Ascending aorta (tissue), 2 donors: ENCODE measurements at regions of chr10 and their contacts with region 1.

Region 1: GRCh38 chr10:96831867-96832720 is at the start of gene LCOR:
- DNase-seq: peak; percentile 25 to 92
- H3K4me3 ChIP-seq: peak within 1 kb of the TSS; percentile 71 to 92
- H3K27ac ChIP-seq: peak within 1 kb of the TSS; percentile 92 to 98
- H3K4me1 ChIP-seq: peaks cover 0 to 19% of the 10 kb centered on the region in 2 donors
- H3K27me3 ChIP-seq: no peaks in the 10 kb centered on the region
- CTCF ChIP-seq: peak in 2 of 3 experiments; percentile 3 to 25
- total RNA-seq, gene LCOR: 7.5 TPM

Region 2: GRCh38 chr10:96395931-96396877 is 435.9 kb before region 1 on chr10:
- intact Hi-C with region 1: loop called (anchors 5 kb)
- DNase-seq: peak in 1 of 2 donors; percentile 72
- H3K4me3 ChIP-seq: no peak overlapping the region
- H3K27ac ChIP-seq: no peak overlapping the region
- H3K4me1 ChIP-seq: no peaks in the 10 kb centered on the region
- H3K27me3 ChIP-seq: no peaks in the 10 kb centered on the region
- CTCF ChIP-seq: peak; percentile 54 to 77 (median 64)

Region 3: DNA sequence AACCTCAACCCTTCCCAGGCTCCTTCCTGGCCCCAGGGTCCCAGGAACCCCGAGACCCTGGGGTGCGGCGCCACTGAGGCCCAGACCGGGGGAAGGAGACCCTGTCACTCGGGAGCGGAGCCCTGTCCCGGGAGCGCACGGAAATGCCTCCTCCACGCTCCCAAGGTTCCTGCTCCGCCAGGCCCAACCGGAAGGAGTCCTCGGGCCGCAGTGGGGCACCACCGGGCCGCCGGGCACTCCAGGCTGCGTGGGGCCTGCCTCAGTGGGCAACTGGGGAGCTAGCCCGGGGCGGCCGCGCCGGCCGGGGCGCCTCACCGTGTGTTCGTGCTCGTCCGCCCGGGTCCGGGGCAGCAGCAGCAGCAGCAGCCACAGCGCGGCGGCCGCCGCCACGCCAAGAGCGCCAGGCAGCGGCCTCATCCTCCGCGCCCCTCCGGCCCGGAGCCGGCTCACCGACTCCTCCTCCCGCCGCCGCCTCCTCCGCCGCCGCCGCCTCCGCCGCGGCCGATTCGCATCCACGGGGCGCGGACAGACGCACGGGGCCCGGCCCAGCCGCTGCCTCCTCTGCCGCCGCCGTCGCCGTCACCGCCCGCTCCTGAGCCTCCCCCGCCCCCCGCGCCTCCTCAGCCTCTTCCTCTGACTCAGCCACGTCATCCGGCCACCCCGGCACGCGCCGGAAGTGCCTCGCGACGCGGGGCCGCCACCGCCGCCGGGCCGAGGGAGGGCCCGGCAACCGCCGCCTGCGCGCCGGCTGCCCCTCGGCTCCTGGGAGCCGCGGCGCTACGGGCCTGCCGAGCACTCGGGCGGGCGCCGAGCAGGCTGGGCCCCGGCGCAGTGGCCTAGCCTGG is 245.5 kb before region 1 on chr10 and contains the start of gene TM9SF3:
- intact Hi-C with region 1: loop called (anchors 1 kb)
- DNase-seq: peak; percentile 67 to 96
- H3K4me3 ChIP-seq: peak within 1 kb of the TSS; percentile 96 to 97
- H3K27ac ChIP-seq: peak within 1 kb of the TSS; percentile 97 to 98
- H3K4me1 ChIP-seq: peaks cover 3 to 44% of the 10 kb centered on the region in 2 donors
- H3K27me3 ChIP-seq: no peaks in the 10 kb centered on the region
- CTCF ChIP-seq: peak in 1 of 3 experiments; percentile 18
- total RNA-seq, gene TM9SF3: 30.4 TPM

Region 4: DNA sequence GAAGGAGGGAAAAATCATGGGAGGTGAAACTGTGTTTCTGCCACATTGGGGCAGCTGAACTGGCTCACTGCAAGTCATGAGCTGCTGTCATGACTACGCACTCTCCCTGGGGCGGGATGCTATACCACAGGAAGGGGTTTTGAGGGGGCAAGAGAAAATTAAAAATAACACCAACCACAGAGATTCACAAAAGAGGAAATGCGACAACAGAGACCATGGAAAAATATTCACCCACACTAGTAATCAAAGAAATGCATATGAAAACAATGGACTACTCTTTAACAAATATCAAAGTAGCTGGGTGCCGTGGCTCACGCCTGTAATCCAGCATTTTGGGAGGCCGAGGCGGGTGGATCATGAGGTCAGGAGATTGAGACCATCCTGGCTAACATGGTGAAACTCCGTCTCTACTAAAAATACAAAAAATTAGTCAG is 180.1 kb before region 1 on chr10:
- intact Hi-C with region 1: no loop called
- DNase-seq: peak in 1 of 2 donors; percentile 18
- H3K4me3 ChIP-seq: no peak overlapping the region
- H3K27ac ChIP-seq: no peak overlapping the region
- H3K4me1 ChIP-seq: no peaks in the 10 kb centered on the region
- H3K27me3 ChIP-seq: no peaks in the 10 kb centered on the region
- CTCF ChIP-seq: no peak

Region 5: GRCh38 chr10:96863922-96864543 is 31.9 kb after region 1 on chr10:
- intact Hi-C with region 1: loop called (anchors 2 kb)
- DNase-seq: no peak
- H3K4me3 ChIP-seq: no peak overlapping the region
- H3K27ac ChIP-seq: no peak overlapping the region
- H3K4me1 ChIP-seq: peaks cover 0 to 13% of the 10 kb centered on the region in 2 donors
- H3K27me3 ChIP-seq: no peaks in the 10 kb centered on the region
- CTCF ChIP-seq: no peak

Region 6: DNA sequence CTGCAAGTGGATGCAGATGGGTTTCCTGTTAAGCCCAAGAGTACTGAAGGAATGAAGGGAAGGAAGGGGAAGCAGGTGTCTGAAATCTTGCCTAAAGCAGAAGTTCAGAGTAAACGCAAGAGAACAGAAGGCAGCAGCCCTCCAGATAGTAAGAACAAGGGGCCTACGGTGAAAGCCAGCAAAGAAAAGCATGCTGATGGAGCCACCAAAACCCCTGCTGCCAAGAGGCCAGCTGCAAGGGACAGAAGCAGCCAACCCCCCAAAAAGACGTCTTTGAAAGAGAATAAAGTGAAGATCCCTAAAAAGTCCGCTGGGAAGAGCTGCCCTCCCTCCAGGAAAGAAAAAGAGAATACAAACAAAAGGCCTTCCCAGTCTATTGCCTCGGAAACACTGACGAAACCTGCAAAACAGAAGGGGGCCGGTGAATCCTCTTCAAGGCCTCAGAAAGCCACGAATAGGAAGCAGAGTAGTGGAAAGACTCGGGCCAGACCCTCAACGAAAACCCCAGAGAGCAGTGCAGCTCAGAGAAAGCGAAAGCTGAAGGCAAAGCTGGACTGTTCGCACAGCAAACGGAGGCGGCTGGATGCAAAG is 152.5 kb after region 1 on chr10:
- intact Hi-C with region 1: no loop called
- DNase-seq: no peak
- H3K4me3 ChIP-seq: no peak overlapping the region
- H3K27ac ChIP-seq: no peak overlapping the region
- H3K4me1 ChIP-seq: peaks cover 0 to 11% of the 10 kb centered on the region in 2 donors
- H3K27me3 ChIP-seq: no peaks in the 10 kb centered on the region
- CTCF ChIP-seq: no peak

Region 7: GRCh38 chr10:97059006-97059871 is 227.1 kb after region 1 on chr10:
- intact Hi-C with region 1: no loop called
- DNase-seq: no peak
- H3K4me3 ChIP-seq: no peak overlapping the region
- H3K27ac ChIP-seq: no peak overlapping the region
- H3K4me1 ChIP-seq: no peaks in the 10 kb centered on the region
- H3K27me3 ChIP-seq: no peaks in the 10 kb centered on the region
- CTCF ChIP-seq: no peak

Region 8: DNA sequence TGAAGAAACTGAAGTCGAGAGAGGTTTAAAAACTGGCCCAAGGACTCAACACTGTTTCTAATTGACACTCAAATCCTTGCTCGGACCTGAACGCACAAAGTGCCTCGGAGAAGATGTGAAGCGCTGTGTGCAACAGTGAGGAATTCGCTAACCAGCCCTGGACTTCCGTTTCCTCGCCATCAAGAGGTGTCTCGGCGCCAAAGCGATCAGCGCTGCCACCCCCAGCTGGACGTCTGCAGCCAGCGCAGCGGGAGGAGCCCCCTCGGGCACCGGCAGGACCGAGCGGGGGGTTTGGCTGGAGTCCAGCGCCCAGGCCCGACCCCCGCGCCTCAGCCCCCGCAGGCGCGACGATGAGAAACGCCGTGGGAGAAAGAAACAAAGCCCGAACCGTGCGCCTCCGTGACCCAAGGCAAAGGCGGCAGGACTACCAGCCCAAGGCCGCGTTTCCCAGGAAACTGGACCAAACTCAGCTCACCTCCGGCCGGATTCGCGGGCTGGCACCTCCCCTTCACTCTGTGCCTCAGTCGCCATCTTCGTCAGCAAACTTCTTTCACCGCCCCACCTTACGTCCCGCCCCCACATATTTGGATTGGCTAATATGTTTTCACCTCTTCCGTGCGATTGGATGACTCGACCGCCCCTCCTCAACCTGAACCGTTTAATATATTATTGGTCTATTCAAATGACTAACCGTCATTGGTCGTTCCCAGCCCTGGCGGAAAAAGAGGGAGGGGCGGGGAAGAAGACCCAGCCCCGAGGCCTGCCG is 460.2 kb after region 1 on chr10 and contains the start of gene ARHGAP19:
- intact Hi-C with region 1: loop called (anchors 5 kb)
- DNase-seq: peak; percentile 92 to 98
- H3K4me3 ChIP-seq: peak within 1 kb of the TSS; percentile 51 to 76
- H3K27ac ChIP-seq: peak within 1 kb of the TSS; percentile 87 to 92
- H3K4me1 ChIP-seq: peaks cover 0 to 7% of the 10 kb centered on the region in 2 donors
- H3K27me3 ChIP-seq: no peaks in the 10 kb centered on the region
- CTCF ChIP-seq: peak in 1 of 3 experiments; percentile 44
- total RNA-seq, gene ARHGAP19: 4.5 TPM